T-cell (primary cell): ENCODE measurements at regions of chr20 and their contacts with region 1.

Region 1: GRCh38 chr20:31514159-31515071 is at the start of gene HM13:
- DNase-seq: peak; percentile 74 to 95 (median 85)
- ATAC-seq: peak; percentile 86 to 91 (median 88)
- H3K4me3 ChIP-seq: peak within 1 kb of the TSS; percentile 72 to 90
- H3K4me3 Mint-ChIP-seq: no peak within 1 kb of the TSS
- H3K27ac ChIP-seq: peak within 1 kb of the TSS; percentile 53
- H3K27ac Mint-ChIP-seq: peak within 1 kb of the TSS; percentile 27 to 65
- H3K4me1 ChIP-seq: peaks cover 17 to 44% of the 10 kb centered on the region in 2 experiments
- H3K4me1 Mint-ChIP-seq: peaks cover 6 to 15% (median 11%) of the 10 kb centered on the region in 3 donors
- H3K27me3 ChIP-seq: peaks cover 0 to under 1% of the 10 kb centered on the region in 2 experiments
- H3K27me3 Mint-ChIP-seq: no peaks in the 10 kb centered on the region
- total RNA-seq, gene HM13: 108 to 149 (median 140) TPM

Region 2: DNA sequence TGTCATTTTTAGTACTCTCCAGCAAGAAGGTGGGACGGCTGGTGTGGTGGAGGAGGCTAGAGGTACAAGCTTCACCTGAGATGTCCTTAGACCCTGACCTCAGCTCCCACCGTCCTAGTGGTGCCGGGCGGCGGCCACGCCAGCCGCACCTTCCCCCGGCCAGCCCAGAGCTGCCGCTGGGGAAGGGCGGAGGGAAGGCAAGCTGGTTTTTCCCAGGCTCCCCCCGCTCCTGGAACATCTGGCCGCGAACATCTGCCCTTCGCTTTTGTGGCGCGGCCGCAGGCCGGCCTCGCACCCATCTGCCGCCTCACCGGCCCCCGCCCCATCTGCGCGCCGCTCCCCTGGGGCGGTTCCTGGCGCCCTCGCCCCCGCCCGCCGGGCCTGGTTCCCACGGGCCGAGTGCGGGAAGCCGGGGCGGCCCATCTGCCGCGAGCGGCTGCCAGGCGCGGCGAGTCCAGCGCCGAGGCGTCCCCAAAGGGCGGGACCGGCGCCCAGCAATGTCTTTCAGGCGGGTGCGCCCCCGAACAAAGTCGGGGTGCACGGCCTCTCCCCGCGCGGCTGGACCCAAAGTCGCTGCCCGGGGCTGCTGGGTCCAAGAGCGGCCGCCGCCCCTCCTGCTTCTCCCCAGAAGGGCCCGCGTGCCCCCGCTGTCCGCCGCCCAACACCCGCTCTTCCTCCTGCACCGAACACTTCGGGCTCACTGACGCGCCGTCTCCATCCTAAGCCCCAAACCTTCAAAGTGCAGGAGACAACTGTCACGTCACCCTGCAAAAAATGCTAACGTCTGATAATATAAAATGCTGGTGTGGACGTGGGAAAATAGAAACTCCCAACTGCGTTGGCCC is 73.4 kb after region 1 on chr20:
- CTCF ChIA-PET with region 1: interaction called in 1 of 2 experiments, 15 read pairs
- POLR2A ChIA-PET with region 1: no interaction called
- DNase-seq: no peak
- ATAC-seq: peak; percentile 56 to 73 (median 64)
- H3K4me3 ChIP-seq: peak overlapping the region; percentile 7 to 74
- H3K4me3 Mint-ChIP-seq: peak overlapping the region; percentile 75 to 78 (median 78)
- H3K27ac ChIP-seq: no peak overlapping the region
- H3K27ac Mint-ChIP-seq: peak overlapping the region in 1 of 2 donors; percentile 37
- H3K4me1 ChIP-seq: peaks cover 3 to 10% of the 10 kb centered on the region in 2 experiments
- H3K4me1 Mint-ChIP-seq: peaks cover 5 to 14% (median 7%) of the 10 kb centered on the region in 3 donors
- H3K27me3 ChIP-seq: peaks cover 0 to 27% of the 10 kb centered on the region in 2 experiments
- H3K27me3 Mint-ChIP-seq: peaks cover 11 to 26% of the 10 kb centered on the region in 2 donors

Region 3: GRCh38 chr20:31630187-31630790 is 115.9 kb after region 1 on chr20:
- CTCF ChIA-PET with region 1: interaction called in 1 of 2 experiments, 10 read pairs
- POLR2A ChIA-PET with region 1: no interaction called
- DNase-seq: no peak
- ATAC-seq: no peak
- H3K4me3 ChIP-seq: no peak overlapping the region
- H3K4me3 Mint-ChIP-seq: no peak overlapping the region
- H3K27ac ChIP-seq: no peak overlapping the region
- H3K27ac Mint-ChIP-seq: no peak overlapping the region
- H3K4me1 ChIP-seq: peaks cover 0 to 4% of the 10 kb centered on the region in 2 experiments
- H3K4me1 Mint-ChIP-seq: no peaks in the 10 kb centered on the region
- H3K27me3 ChIP-seq: peaks cover 0 to 2% of the 10 kb centered on the region in 2 experiments
- H3K27me3 Mint-ChIP-seq: no peaks in the 10 kb centered on the region